ENCODE measurements at regions of chr1 and their contacts with region 1.

Region 1: GRCh38 chr1:156020292-156021089 is at the start of gene SSR2:
- DNase-seq: peak; percentile 97
- H3K4me3 Mint-ChIP-seq: peak within 1 kb of the TSS; percentile 92
- H3K27ac Mint-ChIP-seq: peak within 1 kb of the TSS; percentile 93
- H3K4me1 Mint-ChIP-seq: peaks cover 27% of the 10 kb centered on the region
- H3K27me3 Mint-ChIP-seq: peaks cover 4% of the 10 kb centered on the region
- total RNA-seq, gene SSR2: 175 and 176 TPM in 2 replicates

Region 2: DNA sequence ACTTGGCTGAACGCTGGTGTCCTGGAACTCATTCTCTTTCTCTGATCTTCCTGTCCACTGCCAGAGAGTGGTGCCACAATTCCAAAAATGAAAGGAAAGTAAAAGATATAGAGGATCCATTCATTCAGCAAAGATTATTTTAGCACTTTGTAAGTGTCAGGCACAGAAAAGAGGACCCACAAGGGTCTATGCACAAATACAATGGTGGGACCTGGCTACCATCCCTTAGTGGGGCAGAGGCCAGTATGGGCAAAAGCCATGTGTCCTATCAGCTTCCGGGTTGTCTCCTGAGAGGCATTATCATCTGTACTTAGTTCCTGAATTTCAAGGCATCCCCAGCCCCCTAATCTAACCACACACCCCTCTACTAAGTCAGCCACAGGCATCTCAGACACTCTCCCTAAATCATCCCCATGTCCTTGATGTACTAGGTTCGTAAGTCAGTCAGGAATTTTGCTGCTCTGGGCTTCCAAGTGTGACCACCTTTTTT is 18.8 kb before region 1 on chr1:
- intact Hi-C with region 1: loop called (anchors 2 kb)
- DNase-seq: no peak
- H3K4me3 Mint-ChIP-seq: no peak overlapping the region
- H3K27ac Mint-ChIP-seq: no peak overlapping the region
- H3K4me1 Mint-ChIP-seq: peaks cover 21% of the 10 kb centered on the region
- H3K27me3 Mint-ChIP-seq: no peaks in the 10 kb centered on the region

Region 3: GRCh38 chr1:156033011-156033410 is 12.5 kb after region 1 on chr1:
- intact Hi-C with region 1: no loop called
- DNase-seq: no peak
- H3K4me3 Mint-ChIP-seq: no peak overlapping the region
- H3K27ac Mint-ChIP-seq: no peak overlapping the region
- H3K4me1 Mint-ChIP-seq: peaks cover 3% of the 10 kb centered on the region
- H3K27me3 Mint-ChIP-seq: no peaks in the 10 kb centered on the region

Region 4: GRCh38 chr1:156045076-156045475 is 24.6 kb after region 1 on chr1:
- intact Hi-C with region 1: no loop called
- DNase-seq: no peak
- H3K4me3 Mint-ChIP-seq: no peak overlapping the region
- H3K27ac Mint-ChIP-seq: no peak overlapping the region
- H3K4me1 Mint-ChIP-seq: peaks cover 11% of the 10 kb centered on the region
- H3K27me3 Mint-ChIP-seq: no peaks in the 10 kb centered on the region

Region 5: GRCh38 chr1:156082309-156083091 is 62.0 kb after region 1 on chr1 and contains the start of gene MEX3A:
- intact Hi-C with region 1: no loop called
- DNase-seq: peak; percentile 90
- H3K4me3 Mint-ChIP-seq: peak within 1 kb of the TSS; percentile 87
- H3K27ac Mint-ChIP-seq: no peak within 1 kb of the TSS
- H3K4me1 Mint-ChIP-seq: peaks cover 9% of the 10 kb centered on the region
- H3K27me3 Mint-ChIP-seq: peaks cover 76% of the 10 kb centered on the region
- total RNA-seq, gene MEX3A: 0.24 and 0.84 TPM in 2 replicates

Measured in activated CD4-positive, alpha-beta T cell treated with anti-CD3 and anti-CD28 coated beads, Interleukin-2, amount 10 ng/mL, durations not matched to agents 24 days and 14 days (primary cell).